ENCODE measurements at regions of chr1 and their contacts with region 1.

Region 1: GRCh38 chr1:165914136-165914798 is 86.9 kb downstream of the UCK2 start:
- DNase-seq: peak; percentile 74
- ATAC-seq: peak; percentile 88
- H3K4me3 Mint-ChIP-seq: no peak overlapping the region
- H3K27ac Mint-ChIP-seq: no peak overlapping the region
- H3K4me1 Mint-ChIP-seq: peaks cover 2% of the 10 kb centered on the region
- H3K27me3 Mint-ChIP-seq: no peaks in the 10 kb centered on the region

Region 2: GRCh38 chr1:165697881-165698760 is 216.1 kb before region 1 on chr1 and contains the start of gene ALDH9A1:
- CTCF ChIA-PET with region 1: interaction called, 3 read pairs
- POLR2A ChIA-PET with region 1: no interaction called
- intact Hi-C with region 1: loop called in 1 of 2 experiments (anchors 1 kb)
- DNase-seq: peak; percentile 90
- ATAC-seq: peak; percentile 91
- H3K4me3 Mint-ChIP-seq: peak within 1 kb of the TSS; percentile 99
- H3K27ac Mint-ChIP-seq: peak within 1 kb of the TSS; percentile 99
- H3K4me1 Mint-ChIP-seq: peaks cover 33% of the 10 kb centered on the region
- H3K27me3 Mint-ChIP-seq: no peaks in the 10 kb centered on the region
- total RNA-seq, gene ALDH9A1: 29.0 to 37.6 TPM

Region 3: DNA sequence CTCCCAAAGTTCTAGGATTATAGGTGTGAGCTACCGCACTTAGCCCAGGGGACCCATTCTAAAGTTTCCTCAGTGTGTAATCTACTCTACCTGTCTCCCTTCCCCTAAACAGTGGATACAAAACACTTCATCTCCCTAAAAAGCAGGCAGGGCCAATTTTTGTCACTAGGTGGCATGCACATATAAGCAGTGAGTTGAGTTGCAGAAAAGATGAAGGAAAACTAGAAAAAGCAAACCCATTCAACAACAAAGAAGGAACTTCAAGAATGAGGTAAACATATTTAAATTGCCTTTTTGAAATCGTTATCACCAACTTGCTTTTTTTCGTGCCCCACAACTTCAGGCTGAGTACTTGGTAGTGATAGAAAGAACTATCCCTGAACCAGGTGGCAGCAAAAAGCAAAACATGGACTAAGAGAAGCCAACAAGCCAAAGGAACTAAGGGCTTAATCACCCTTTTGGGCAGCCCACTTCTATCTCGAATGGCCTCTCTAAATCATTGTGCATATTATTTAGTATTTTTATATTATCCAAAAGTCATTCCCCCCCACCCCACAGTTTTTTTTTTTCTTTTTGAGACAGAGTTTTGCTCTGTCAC is 196.2 kb before region 1 on chr1:
- CTCF ChIA-PET with region 1: interaction called, 3 read pairs
- POLR2A ChIA-PET with region 1: no interaction called
- intact Hi-C with region 1: loop called (anchors 1 kb)
- DNase-seq: peak; percentile 55
- ATAC-seq: no peak
- H3K4me3 Mint-ChIP-seq: no peak overlapping the region
- H3K27ac Mint-ChIP-seq: no peak overlapping the region
- H3K4me1 Mint-ChIP-seq: no peaks in the 10 kb centered on the region
- H3K27me3 Mint-ChIP-seq: peaks cover 3% of the 10 kb centered on the region

Region 4: DNA sequence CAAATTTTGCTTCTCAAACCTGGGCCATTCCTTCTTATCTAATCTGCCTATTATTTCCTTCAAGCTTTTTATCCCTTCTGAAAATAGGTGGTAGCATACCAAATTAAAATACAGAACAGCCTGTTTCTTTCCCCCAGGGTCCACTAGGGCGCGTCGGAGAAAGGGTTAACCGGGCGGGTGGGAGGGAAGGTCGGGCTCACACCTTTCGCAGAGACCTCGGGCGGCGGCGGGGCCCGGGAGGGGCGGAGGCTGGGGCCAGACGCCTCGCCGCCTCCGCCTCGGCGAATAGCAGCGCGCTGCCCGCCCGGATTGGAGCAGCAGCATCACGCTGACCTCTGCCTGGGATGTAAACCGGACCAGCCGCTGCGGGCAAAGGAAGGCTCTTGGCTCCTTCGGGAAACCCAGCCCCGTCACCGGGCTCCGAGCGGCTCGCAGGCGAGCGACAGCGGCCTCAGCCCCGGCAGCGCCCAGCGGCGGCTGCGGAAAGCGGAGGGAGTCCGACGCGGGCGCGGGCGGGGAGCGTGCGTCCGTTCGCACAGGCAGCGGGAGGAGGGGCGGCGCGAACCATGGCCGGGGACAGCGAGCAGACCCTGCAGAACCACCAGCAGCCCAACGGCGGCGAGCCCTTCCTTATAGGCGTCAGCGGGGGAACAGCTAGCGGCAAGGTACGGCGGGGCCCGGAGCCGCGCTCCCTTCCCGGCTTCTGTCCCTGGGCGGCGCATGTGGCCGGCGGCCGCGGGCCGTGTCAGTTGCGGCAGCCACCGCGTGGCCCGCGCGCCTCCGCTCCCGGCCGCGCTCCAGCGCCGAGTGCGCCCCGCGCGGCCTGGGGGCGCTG is 86.8 kb before region 1 on chr1 and contains the start of gene UCK2:
- CTCF ChIA-PET with region 1: no interaction called
- POLR2A ChIA-PET with region 1: no interaction called
- intact Hi-C with region 1: loop called (anchors 1 to 5 kb)
- DNase-seq: peak; percentile 83
- ATAC-seq: peak; percentile 76
- H3K4me3 Mint-ChIP-seq: peak within 1 kb of the TSS; percentile 96
- H3K27ac Mint-ChIP-seq: peak within 1 kb of the TSS; percentile 92
- H3K4me1 Mint-ChIP-seq: peaks cover 13% of the 10 kb centered on the region
- H3K27me3 Mint-ChIP-seq: no peaks in the 10 kb centered on the region
- total RNA-seq, gene UCK2: 69.4 to 81.5 TPM

Region 5: GRCh38 chr1:165954940-165955339 is 40.7 kb after region 1 on chr1:
- CTCF ChIA-PET with region 1: no interaction called
- POLR2A ChIA-PET with region 1: no interaction called
- intact Hi-C with region 1: no loop called
- DNase-seq: no peak
- ATAC-seq: no peak
- H3K4me3 Mint-ChIP-seq: no peak overlapping the region
- H3K27ac Mint-ChIP-seq: no peak overlapping the region
- H3K4me1 Mint-ChIP-seq: no peaks in the 10 kb centered on the region
- H3K27me3 Mint-ChIP-seq: peaks cover 2% of the 10 kb centered on the region